A673 (cell line): ENCODE measurements at regions of chr15 and their contacts with region 1.

Region 1: GRCh38 chr15:45402162-45402954 is 24.0 kb upstream of the GATM start:
- DNase-seq: peak; percentile 99
- H3K4me3 ChIP-seq: peak overlapping the region; percentile 95
- H3K27ac ChIP-seq: peak overlapping the region; percentile 89
- H3K4me1 ChIP-seq: peaks cover 17% of the 10 kb centered on the region
- H3K27me3 ChIP-seq: peaks cover 6% of the 10 kb centered on the region
- CTCF ChIP-seq: no peak

Region 2: GRCh38 chr15:45205192-45205591 is 197.2 kb before region 1 on chr15:
- CTCF ChIA-PET with region 1: no interaction called
- POLR2A ChIA-PET with region 1: interaction called, 3 read pairs
- intact Hi-C with region 1: loop called (anchors 2 kb)
- DNase-seq: peak; percentile 85
- H3K4me3 ChIP-seq: no peak overlapping the region
- H3K27ac ChIP-seq: no peak overlapping the region
- H3K4me1 ChIP-seq: no peaks in the 10 kb centered on the region
- H3K27me3 ChIP-seq: no peaks in the 10 kb centered on the region
- CTCF ChIP-seq: peak; percentile 95